ENCODE measurements at regions of chr11 and their contacts with region 1.

Region 1: GRCh38 chr11:71139516-71140205 is 112.7 kb downstream of the SHANK2 start:
- DNase-seq: peak; percentile 81

Region 2: DNA sequence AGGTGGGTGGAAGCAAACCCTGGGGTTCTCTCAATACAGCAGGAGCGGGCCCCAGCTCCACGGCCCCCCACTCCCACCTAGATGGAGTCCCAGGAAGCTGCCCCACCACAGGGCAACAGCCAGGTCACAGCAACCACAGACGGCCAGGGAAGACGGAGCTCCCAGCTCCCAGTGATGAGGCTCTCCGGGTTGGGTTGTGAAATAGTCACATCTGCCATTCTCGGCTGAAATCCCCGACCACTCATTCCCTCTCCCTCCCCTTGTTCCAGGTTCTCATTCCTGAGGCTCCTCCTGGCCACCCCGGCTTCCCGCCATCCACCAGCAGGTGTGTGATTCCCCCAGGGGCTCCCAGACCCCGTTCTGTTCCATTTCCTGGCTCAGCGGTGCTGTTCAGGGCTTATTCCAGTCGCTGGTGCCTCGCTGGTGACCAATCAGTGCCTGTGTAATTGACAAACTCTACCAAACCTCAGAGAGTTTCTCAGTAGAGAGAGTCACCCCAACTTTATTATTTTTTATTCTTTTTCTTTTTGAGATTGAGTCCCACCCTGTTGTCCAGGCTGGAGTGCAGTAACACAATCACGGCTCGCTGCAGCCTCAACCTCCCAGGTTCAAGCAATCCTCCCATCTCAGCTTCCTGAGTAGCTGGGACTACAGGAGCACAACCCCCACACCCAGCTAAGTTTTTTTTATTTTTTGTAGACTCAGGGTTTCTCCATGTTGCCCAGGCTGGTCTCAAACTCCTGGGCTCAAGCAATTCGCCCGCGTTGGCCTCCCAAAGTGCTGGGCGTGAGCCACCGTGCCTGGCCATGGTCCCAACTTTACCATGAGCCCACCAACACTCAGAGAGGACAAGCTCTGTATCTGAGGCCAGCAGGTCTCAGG is 49.5 kb after region 1 on chr11:
- intact Hi-C with region 1: loop called in 1 of 2 experiments (anchors 2 kb)
- DNase-seq: peak; percentile 44

Measured in posterior vena cava (tissue), 2 donors.